Endothelial cell of umbilical vein (primary cell): ENCODE measurements at regions of chr3 and their contacts with region 1.

Region 1: DNA sequence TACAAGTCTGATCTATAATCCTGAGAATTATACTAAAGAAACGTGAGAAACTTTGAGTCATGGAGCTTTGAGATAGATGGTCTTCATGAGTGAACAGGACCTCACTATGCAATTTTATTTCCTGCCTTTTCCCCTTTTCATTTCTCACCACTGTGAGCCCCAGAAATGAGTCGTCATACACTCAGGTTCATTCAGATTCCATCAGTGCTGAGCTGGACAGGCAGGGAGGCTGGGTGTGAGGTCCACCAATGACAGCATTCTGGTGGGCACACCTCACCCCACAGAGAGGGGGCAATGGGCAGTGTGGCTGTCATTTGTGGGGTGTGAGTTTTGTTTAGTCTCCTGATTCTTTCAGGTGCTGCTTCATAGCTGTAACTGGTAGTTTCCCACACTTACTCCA is 16.9 kb downstream of the TIGIT start:
- DNase-seq: no peak
- H3K4me3 ChIP-seq: no peak overlapping the region
- H3K27ac ChIP-seq: no peak overlapping the region
- H3K4me1 ChIP-seq: no peaks in the 10 kb centered on the region
- H3K27me3 ChIP-seq: no peaks in the 10 kb centered on the region
- CTCF ChIP-seq: no peak
- POLR2A ChIP-seq: no peak

Region 2: DNA sequence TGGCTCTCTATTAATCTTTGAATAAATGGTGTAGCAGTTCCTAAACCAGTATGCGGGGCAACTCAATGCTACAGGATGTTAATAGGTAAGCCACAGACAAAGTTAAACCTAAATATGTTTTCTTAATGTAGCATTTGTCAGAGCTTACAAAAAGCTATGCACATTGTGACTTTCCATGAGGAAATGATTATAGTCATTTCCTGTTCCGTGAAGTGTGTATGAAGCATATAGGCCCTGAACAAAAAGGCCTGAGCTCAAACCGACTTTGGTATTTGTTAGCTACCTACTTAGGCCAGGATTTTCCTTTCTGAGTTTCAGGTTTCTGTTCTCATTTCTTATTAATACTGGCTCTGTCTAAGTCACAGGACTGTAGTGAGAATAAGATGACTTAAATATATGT is 87.6 kb before region 1 on chr3:
- CTCF ChIA-PET with region 1: no interaction called
- POLR2A ChIA-PET with region 1: no interaction called
- dilution Hi-C with region 1: no loop called
- intact Hi-C with region 1: loop called (anchors 5 kb)
- DNase-seq: peak; percentile 76
- H3K4me3 ChIP-seq: no peak overlapping the region
- H3K27ac ChIP-seq: peak overlapping the region; percentile 75
- H3K4me1 ChIP-seq: peaks cover 16% of the 10 kb centered on the region
- H3K27me3 ChIP-seq: no peaks in the 10 kb centered on the region
- CTCF ChIP-seq: no peak
- POLR2A ChIP-seq: no peak

Region 3: DNA sequence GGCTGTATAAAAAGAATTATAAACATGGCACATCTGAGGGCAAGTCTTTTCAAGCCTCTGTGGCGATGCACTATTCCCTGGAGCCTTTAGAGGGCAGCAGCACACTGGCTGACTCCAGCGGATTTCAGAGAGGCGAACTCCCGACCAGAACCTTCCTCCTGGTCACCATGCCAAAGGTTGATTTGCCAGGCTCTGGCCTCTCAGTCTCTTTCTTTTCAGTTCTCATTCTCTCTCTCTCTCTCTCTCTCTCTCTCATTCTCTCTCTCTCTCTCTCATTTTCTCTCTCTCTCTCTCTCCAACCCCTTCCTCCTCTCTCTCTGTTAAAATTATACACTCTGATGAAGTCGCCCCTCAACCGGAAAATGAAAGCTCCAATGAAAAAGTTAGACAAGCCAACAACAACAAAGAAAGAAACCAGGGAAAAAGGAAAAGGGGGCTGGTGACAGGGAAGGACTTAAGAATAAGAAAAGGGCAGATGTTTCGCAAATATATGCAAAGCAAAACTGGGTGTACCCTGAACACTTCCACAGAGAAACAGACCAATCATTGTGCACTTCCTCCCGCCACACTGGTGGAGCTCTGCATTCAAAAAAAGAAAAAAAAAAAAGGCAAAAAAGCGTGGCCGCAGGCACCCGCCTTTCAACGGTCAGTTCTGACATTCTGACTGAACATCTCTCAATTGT is 73.3 kb after region 1 on chr3:
- CTCF ChIA-PET with region 1: no interaction called
- POLR2A ChIA-PET with region 1: no interaction called
- dilution Hi-C with region 1: no loop called
- intact Hi-C with region 1: no loop called
- DNase-seq: peak; percentile 81
- H3K4me3 ChIP-seq: peak overlapping the region; percentile 35 to 61 (median 42)
- H3K27ac ChIP-seq: peak overlapping the region; percentile 55
- H3K4me1 ChIP-seq: peaks cover 9% of the 10 kb centered on the region
- H3K27me3 ChIP-seq: no peaks in the 10 kb centered on the region
- CTCF ChIP-seq: peak; percentile 89 to 92
- POLR2A ChIP-seq: no peak